ENCODE measurements at regions of chr10 and their contacts with region 1.

Region 1: GRCh38 chr10:71608819-71609768 is 110.5 kb downstream of the C10orf105 start:
- DNase-seq: peak; percentile 93

Region 2: DNA sequence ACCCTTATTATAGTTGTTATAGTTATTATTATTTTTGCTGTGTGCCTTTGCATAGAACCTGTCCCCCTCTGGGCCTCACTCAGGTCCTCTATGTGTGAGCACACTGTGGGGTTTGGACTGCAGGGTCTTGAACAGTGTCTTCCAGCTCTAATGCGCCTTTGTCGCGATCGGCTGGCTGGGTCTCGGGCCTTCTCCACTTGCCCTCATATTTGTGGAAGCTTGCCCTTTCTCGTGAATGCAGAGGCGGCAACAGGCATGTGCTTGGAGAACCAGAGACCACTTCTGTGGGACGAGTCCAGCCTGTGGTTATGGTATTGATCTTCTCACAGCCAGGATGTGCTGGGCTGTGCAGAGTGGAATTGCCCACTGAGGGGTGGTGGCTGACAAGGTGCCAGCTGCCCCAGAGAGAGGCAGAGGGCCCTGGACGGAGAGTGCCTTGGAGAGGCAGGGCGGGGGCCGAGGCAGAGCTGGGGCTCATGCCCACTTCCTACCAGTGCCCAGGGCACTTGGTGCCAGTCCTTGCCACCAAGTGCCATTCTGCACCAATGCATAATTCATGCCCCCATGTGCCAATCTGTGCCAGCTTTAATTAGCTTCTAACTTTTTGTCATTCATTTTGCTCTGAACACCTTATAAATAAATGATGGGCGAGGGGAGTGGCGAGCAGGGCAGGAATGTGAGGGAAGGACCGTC is 219.2 kb before region 1 on chr10:
- intact Hi-C with region 1: loop called in 1 of 2 experiments (anchors 5 kb)
- DNase-seq: no peak

Region 3: GRCh38 chr10:73467206-73467605 is 1858.1 kb after region 1 on chr10:
- intact Hi-C with region 1: loop called in 1 of 2 experiments (anchors 10 kb)
- DNase-seq: no peak